Activated B cell treated with CpG ODN at 0.5 μM for 24 hours (primary cell): ENCODE measurements at regions of chr14 and their contacts with region 1.

Region 1: DNA sequence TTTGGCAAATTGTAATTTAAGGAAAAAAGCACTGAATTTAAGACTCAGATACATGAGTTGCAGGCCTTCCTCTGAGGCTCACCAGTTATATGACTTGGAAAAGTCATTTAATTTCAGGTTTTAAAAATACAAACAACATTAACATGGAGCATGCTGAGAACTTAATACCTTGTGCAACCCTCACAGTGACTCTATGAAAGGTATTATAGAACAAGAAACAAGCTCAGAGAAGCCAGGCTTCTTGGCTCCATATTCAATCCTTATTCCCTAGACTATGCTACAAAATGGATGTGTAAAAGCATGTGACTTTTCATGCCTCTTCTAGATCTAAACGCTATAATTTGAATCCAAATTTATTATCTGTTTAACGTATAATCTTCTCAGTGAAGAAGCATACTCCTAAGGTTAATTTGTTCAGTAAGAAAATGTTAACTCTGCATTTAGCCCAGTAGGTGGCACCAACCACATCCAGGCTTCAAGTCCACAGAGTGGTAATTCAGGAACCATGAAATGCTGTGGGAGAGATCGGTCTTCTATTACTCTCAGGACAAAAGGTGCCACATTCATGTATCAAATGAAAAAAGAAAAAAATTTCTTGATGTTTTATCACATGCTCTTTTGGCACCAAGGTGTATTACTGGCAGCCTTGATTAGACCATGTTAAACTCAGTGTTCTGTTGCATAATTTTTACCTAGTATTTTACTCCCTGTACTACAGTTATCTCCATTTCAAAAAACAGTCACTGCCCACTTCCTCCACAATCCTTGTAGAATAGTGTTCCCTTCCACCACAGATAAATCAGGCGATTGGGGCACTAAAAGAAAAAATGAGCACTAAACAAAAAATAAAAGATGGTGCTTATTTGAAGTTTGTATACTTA is 9.3 kb downstream of the CCDC196 start:
- DNase-seq: no peak
- ATAC-seq: peak; percentile 70
- H3K4me3 Mint-ChIP-seq: no peak overlapping the region
- H3K27ac Mint-ChIP-seq: no peak overlapping the region
- H3K4me1 Mint-ChIP-seq: peaks cover 14% of the 10 kb centered on the region
- H3K27me3 Mint-ChIP-seq: no peaks in the 10 kb centered on the region
- CTCF ChIP-seq: peak; percentile 21

Region 2: GRCh38 chr14:66330916-66331315 is 164.5 kb before region 1 on chr14:
- CTCF ChIA-PET with region 1: no interaction called
- POLR2A ChIA-PET with region 1: no interaction called
- intact Hi-C with region 1: no loop called
- DNase-seq: no peak
- ATAC-seq: no peak
- H3K4me3 Mint-ChIP-seq: no peak overlapping the region
- H3K27ac Mint-ChIP-seq: no peak overlapping the region
- H3K4me1 Mint-ChIP-seq: no peaks in the 10 kb centered on the region
- H3K27me3 Mint-ChIP-seq: peaks cover 5% of the 10 kb centered on the region
- CTCF ChIP-seq: no peak

Region 3: GRCh38 chr14:66468778-66469367 is 26.6 kb before region 1 on chr14:
- CTCF ChIA-PET with region 1: no interaction called
- POLR2A ChIA-PET with region 1: no interaction called
- intact Hi-C with region 1: no loop called
- DNase-seq: no peak
- ATAC-seq: no peak
- H3K4me3 Mint-ChIP-seq: no peak overlapping the region
- H3K27ac Mint-ChIP-seq: no peak overlapping the region
- H3K4me1 Mint-ChIP-seq: no peaks in the 10 kb centered on the region
- H3K27me3 Mint-ChIP-seq: no peaks in the 10 kb centered on the region
- CTCF ChIP-seq: no peak

Region 4: GRCh38 chr14:66507722-66508546 is 12.5 kb after region 1 on chr14 and contains the start of gene GPHN:
- CTCF ChIA-PET with region 1: interaction called, 6 read pairs
- POLR2A ChIA-PET with region 1: interaction called, 3 read pairs
- intact Hi-C with region 1: loop called (anchors 1 kb)
- DNase-seq: peak; percentile 75
- ATAC-seq: peak; percentile 85
- H3K4me3 Mint-ChIP-seq: peak within 1 kb of the TSS; percentile 97
- H3K27ac Mint-ChIP-seq: peak within 1 kb of the TSS; percentile 86
- H3K4me1 Mint-ChIP-seq: peaks cover 23% of the 10 kb centered on the region
- H3K27me3 Mint-ChIP-seq: peaks cover 6% of the 10 kb centered on the region
- CTCF ChIP-seq: no peak
- total RNA-seq, gene GPHN: 36.9 and 40.8 TPM in 2 replicates

Region 5: DNA sequence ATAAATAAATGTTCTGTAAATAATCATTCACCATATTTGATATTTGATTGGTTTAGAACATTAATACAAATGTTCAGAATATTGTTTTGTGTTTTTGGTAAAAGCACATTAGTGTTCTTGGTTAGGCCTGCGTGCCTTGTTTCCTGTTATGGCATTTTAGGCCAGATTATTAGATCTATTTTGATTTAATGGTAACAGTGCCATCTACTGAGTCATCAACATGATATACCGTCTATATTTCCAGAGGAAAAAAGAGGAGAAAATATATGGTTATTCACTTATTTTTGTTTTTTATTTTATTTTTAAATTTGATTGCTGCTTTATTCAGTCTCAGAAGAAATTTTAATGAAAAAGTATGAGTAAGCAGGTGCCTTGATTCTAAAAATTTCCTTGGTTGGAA is 72.8 kb after region 1 on chr14:
- CTCF ChIA-PET with region 1: no interaction called
- POLR2A ChIA-PET with region 1: no interaction called
- intact Hi-C with region 1: loop called (anchors 5 kb)
- DNase-seq: no peak
- ATAC-seq: no peak
- H3K4me3 Mint-ChIP-seq: no peak overlapping the region
- H3K27ac Mint-ChIP-seq: no peak overlapping the region
- H3K4me1 Mint-ChIP-seq: no peaks in the 10 kb centered on the region
- H3K27me3 Mint-ChIP-seq: no peaks in the 10 kb centered on the region
- CTCF ChIP-seq: no peak

Region 6: DNA sequence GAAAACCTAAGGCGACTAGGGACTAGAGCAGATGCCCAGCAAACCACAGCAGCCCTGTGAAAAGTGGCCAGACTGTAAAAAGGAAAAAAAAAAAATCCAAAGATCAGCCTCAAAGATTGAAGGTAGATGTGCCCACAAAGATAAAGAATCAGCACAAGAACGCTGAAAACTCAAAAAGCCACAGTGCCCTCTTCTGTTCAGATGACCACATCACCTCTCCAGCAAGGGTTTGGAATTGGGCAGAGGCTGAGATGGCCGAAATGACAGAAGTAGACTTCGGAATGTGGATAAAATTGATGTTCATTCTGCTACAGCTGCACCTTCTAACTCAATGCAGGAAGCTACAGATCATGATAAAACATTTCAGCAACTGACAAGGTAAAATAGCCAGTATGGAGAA is 166.9 kb after region 1 on chr14:
- CTCF ChIA-PET with region 1: no interaction called
- POLR2A ChIA-PET with region 1: no interaction called
- intact Hi-C with region 1: loop called (anchors 1 kb)
- DNase-seq: no peak
- ATAC-seq: no peak
- H3K4me3 Mint-ChIP-seq: no peak overlapping the region
- H3K27ac Mint-ChIP-seq: no peak overlapping the region
- H3K4me1 Mint-ChIP-seq: no peaks in the 10 kb centered on the region
- H3K27me3 Mint-ChIP-seq: no peaks in the 10 kb centered on the region
- CTCF ChIP-seq: no peak

Region 7: DNA sequence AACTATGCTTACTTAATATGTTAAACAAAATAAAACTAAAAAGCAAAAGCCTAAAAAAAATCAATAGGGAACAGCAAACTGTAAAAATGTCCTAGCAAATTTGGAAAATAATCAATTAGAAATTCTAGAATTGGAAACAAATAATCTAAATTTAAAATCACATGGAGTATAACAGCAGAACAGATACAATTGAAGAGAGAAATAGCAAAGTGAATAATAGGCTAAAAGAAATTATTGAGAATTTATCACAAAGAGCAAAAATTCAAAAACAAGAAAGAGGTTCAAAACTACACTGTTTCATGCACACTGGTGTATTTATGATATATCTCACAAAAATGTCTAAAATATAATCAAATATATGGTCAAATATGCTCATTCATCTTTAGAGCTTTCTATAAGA is 244.4 kb after region 1 on chr14:
- CTCF ChIA-PET with region 1: no interaction called
- POLR2A ChIA-PET with region 1: no interaction called
- intact Hi-C with region 1: no loop called
- DNase-seq: no peak
- ATAC-seq: no peak
- H3K4me3 Mint-ChIP-seq: no peak overlapping the region
- H3K27ac Mint-ChIP-seq: no peak overlapping the region
- H3K4me1 Mint-ChIP-seq: no peaks in the 10 kb centered on the region
- H3K27me3 Mint-ChIP-seq: no peaks in the 10 kb centered on the region
- CTCF ChIP-seq: no peak

Region 8: DNA sequence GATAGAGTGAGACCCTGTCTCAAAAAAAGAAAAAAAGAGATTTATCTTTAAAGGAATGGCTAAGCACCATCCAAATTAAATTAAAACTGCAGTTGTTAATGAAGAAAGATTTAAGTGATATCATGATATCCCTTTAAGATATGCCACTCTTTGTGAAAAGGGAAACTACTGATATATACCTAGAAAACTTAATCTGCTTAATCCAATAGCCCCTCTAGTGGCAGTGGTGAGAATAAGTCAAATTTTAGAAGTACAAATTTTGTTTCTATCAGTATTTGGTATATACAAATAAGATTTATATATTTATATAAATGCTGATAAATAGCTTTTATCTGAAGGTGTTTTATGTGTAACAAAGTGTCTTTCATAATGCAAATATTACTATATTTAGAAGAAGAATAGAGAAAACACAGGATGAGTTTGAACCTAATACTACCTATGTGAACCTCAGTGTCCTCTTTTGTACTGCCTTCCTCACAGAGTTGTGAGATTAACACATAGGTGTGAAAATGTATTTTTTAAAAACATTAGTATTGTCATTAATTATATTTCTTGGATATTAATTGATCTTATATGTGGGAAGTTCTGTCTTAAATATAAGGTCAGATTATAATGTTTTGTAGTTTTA is 642.4 kb after region 1 on chr14:
- CTCF ChIA-PET with region 1: no interaction called
- POLR2A ChIA-PET with region 1: no interaction called
- intact Hi-C with region 1: loop called (anchors 1 kb)
- DNase-seq: no peak
- ATAC-seq: no peak
- H3K4me3 Mint-ChIP-seq: no peak overlapping the region
- H3K27ac Mint-ChIP-seq: no peak overlapping the region
- H3K4me1 Mint-ChIP-seq: no peaks in the 10 kb centered on the region
- H3K27me3 Mint-ChIP-seq: no peaks in the 10 kb centered on the region
- CTCF ChIP-seq: no peak